Calu3 (cell line): ENCODE measurements at regions of chr7 and their contacts with region 1.

Region 1: GRCh38 chr7:117385340-117386109 is 41.8 kb downstream of the ASZ1 start:
- DNase-seq: no peak
- H3K4me3 Mint-ChIP-seq: no peak overlapping the region
- H3K27ac Mint-ChIP-seq: no peak overlapping the region
- H3K4me1 Mint-ChIP-seq: no peaks in the 10 kb centered on the region
- H3K27me3 Mint-ChIP-seq: no peaks in the 10 kb centered on the region
- CTCF ChIP-seq: no peak

Region 2: GRCh38 chr7:116173051-116174028 is 1212.2 kb before region 1 on chr7:
- CTCF ChIA-PET with region 1: no interaction called
- intact Hi-C with region 1: loop called (anchors 5 kb)
- DNase-seq: peak; percentile 38
- H3K4me3 Mint-ChIP-seq: no peak overlapping the region
- H3K27ac Mint-ChIP-seq: no peak overlapping the region
- H3K4me1 Mint-ChIP-seq: peaks cover 23% of the 10 kb centered on the region
- H3K27me3 Mint-ChIP-seq: peaks cover 17% of the 10 kb centered on the region
- CTCF ChIP-seq: peak; percentile 25

Region 3: DNA sequence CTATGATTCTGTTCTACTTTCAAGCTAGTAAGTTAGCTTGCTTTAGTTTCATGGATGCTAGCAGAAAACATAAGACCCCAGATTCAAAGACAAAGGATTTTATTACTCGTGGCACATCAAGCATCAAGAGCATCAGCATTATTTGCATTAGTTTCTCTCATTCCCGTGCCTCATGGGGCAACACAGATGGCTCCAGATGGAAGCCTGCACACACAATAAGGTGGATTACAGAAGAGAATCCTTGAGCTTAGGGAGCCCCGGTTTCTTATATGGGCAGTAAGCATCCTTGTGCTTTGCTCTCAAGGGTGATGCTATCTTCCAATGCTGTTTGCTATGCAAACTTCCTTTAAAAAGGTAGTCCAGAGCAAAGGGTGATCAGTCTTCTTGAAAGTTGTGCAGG is 533.9 kb before region 1 on chr7:
- CTCF ChIA-PET with region 1: no interaction called
- intact Hi-C with region 1: no loop called
- DNase-seq: no peak
- H3K4me3 Mint-ChIP-seq: no peak overlapping the region
- H3K27ac Mint-ChIP-seq: no peak overlapping the region
- H3K4me1 Mint-ChIP-seq: no peaks in the 10 kb centered on the region
- H3K27me3 Mint-ChIP-seq: peaks cover 24% of the 10 kb centered on the region
- CTCF ChIP-seq: no peak

Region 4: GRCh38 chr7:116984917-116985316 is 400.6 kb before region 1 on chr7:
- CTCF ChIA-PET with region 1: no interaction called
- intact Hi-C with region 1: loop called (anchors 5 kb)
- DNase-seq: no peak
- H3K4me3 Mint-ChIP-seq: no peak overlapping the region
- H3K27ac Mint-ChIP-seq: no peak overlapping the region
- H3K4me1 Mint-ChIP-seq: peaks cover 6% of the 10 kb centered on the region
- H3K27me3 Mint-ChIP-seq: no peaks in the 10 kb centered on the region
- CTCF ChIP-seq: peak; percentile 45

Region 5: DNA sequence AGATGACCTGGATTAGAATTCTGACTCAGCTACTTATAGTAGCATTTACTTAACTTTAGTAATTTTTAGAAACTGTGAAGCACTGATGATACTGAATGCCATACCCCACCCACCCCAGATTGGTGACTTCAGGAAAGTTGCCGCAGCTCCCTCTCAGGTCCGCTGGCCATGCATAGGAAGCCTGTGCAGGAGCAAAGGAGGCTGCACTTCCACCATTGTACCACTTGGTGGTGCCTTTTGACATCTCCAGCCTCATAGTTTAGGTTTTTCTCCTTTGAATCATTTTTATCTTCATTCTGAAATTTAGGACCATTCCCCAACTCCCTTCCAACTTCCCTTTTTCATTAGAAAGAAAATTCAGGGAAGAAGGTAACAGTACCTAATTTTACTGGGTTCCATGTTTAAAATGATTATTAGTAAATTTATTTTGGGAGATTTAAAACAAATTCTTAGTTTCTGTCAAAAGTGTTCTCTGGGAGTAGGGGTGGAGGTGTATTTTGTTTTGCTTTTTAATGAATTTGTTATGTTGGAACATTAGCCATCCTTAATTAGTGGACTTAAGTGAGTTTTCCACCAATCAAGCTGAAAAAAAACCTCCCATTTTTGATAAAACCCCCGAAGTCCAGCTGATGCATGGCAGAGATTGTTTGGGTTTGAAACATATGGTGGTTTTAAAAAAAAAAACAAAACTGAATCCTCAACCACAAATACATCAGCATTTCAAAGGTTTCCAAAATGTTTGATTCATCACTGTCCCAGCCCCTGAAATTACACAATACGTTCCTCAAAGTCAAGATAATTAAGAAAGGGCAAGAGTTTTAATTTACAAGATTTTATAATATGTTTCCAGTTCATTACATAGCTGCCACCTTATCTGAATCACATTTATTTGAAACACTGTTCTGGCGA is 172.3 kb before region 1 on chr7:
- CTCF ChIA-PET with region 1: no interaction called
- intact Hi-C with region 1: loop called (anchors 1 kb)
- DNase-seq: peak; percentile 73
- H3K4me3 Mint-ChIP-seq: no peak overlapping the region
- H3K27ac Mint-ChIP-seq: no peak overlapping the region
- H3K4me1 Mint-ChIP-seq: no peaks in the 10 kb centered on the region
- H3K27me3 Mint-ChIP-seq: no peaks in the 10 kb centered on the region
- CTCF ChIP-seq: peak; percentile 90

Region 6: DNA sequence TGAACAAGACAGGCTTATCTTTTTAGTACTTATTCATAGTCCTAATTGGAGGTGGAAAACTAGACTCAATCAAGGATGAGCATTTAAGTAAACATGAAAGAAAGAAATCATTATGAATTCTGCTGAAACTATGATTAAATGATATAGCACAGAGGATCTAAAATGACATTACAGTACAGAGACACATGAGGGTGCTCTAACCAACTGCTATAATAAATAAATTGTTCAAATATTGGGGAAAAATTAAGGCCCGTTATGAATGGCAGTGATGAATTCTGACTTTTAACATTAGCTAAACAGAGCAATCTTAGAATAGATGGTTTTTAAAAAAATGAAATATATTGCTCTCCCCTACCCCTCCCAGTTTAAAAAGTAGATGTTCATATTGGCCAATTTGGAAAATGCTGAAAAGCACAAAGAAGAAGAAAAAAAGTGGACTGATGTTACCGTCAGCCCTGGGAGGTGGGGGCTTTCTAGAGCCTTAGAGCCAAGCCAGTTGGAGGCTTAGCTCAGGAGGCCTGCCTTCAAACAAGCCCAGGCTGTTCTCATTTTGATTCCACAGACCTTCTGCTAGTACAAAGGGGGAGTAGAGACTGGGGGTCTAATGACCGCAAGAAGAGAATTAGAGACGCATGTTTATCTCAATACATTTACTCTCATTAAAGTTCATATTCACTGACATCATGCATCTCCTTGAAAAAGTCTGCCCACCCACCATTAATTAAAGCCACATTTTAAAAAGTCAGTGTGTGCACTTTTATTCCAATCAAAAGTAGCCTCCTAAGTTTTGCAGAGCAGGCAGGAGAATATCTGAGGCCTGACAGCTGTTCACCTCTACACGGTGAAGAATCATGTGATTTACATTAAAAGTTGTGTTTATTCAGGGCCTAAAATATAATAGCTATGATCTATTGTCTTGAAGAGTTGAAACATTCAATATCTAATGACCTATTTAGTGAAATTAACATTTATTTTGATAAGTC is 72.6 kb before region 1 on chr7:
- CTCF ChIA-PET with region 1: no interaction called
- intact Hi-C with region 1: loop called (anchors 1 kb)
- DNase-seq: no peak
- H3K4me3 Mint-ChIP-seq: no peak overlapping the region
- H3K27ac Mint-ChIP-seq: no peak overlapping the region
- H3K4me1 Mint-ChIP-seq: no peaks in the 10 kb centered on the region
- H3K27me3 Mint-ChIP-seq: no peaks in the 10 kb centered on the region
- CTCF ChIP-seq: peak; percentile 27